Naive thymus-derived CD4-positive, alpha-beta T cell (primary cell): ENCODE measurements at regions of chr15 and their contacts with region 1.

Region 1: GRCh38 chr15:76190834-76191538 is 120.3 kb downstream of the ETFA start:
- DNase-seq: peak; percentile 13 to 75 (median 43)
- ATAC-seq: peak; percentile 88
- H3K4me3 ChIP-seq: no peak overlapping the region
- H3K4me3 Mint-ChIP-seq: peak overlapping the region; percentile 37 to 71 (median 66)
- H3K27ac ChIP-seq: no peak overlapping the region
- H3K27ac Mint-ChIP-seq: no peak overlapping the region
- H3K4me1 ChIP-seq: no peaks in the 10 kb centered on the region
- H3K4me1 Mint-ChIP-seq: peaks cover 8 to 13% (median 13%) of the 10 kb centered on the region in 7 donors
- H3K27me3 ChIP-seq: peaks cover 0 to 3% of the 10 kb centered on the region in 2 donors
- H3K27me3 Mint-ChIP-seq: peaks cover 31 to 51% (median 37%) of the 10 kb centered on the region in 5 donors

Region 2: DNA sequence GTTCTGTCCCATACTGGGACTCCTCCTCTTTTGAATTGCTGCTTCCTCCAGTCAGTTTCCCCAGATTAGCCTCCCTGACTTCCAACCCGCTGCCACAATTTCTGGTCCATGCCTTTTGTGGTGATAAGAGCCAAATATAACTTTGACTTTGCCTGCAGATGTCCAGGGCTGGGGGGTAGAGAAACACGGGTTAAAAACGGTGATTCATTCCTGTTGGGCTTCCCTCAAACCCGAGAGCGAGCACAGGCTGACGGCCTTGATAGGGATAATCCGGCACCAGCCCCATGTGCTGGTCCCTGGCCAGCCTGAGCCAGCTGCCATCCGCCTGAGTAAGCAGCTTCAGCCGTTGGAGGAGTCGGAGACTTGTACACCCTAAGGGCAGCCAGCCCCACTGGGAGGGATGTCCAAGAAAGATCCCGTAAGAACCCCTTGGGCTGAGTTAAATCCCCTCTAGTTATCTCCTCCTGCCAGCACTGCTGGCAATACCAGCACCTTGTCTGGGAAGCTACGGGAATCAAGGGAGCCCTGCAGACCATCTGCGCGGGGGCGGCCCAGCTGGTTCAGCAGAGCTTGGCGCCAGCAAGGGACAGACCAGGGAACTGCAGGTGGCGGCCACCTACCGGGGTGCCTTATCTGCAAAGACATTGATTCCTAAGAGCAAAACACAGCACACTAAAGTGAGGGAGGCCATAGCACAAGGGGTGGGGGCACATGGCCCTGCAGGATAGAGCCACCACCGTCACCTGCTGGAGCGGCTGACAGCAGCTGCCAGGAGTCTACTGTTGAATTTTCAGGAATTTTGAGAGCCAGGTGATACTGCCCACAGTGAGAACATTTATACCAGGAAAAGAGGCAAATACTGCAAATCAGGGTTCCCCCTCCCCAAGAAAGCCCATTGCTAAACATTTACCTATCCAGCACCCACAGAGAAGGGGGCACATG is 496.5 kb before region 1 on chr15:
- CTCF ChIA-PET with region 1: no interaction called
- POLR2A ChIA-PET with region 1: no interaction called
- intact Hi-C with region 1: no loop called
- DNase-seq: peak in 1 of 9 donors; percentile 5
- ATAC-seq: peak; percentile 40
- H3K4me3 ChIP-seq: no peak overlapping the region
- H3K4me3 Mint-ChIP-seq: no peak overlapping the region
- H3K27ac ChIP-seq: no peak overlapping the region
- H3K27ac Mint-ChIP-seq: peak overlapping the region in 1 of 9 donors; percentile 25
- H3K4me1 ChIP-seq: no peaks in the 10 kb centered on the region
- H3K4me1 Mint-ChIP-seq: peaks cover 8 to 20% (median 15%) of the 10 kb centered on the region in 7 donors
- H3K27me3 ChIP-seq: no peaks in the 10 kb centered on the region
- H3K27me3 Mint-ChIP-seq: peaks cover 6 to 16% (median 8%) of the 10 kb centered on the region in 5 donors

Region 3: GRCh38 chr15:76336254-76337058 is 145.5 kb after region 1 on chr15 and contains the start of gene ISL2:
- CTCF ChIA-PET with region 1: no interaction called
- POLR2A ChIA-PET with region 1: no interaction called
- intact Hi-C with region 1: loop called in 1 of 2 experiments (anchors 5 kb)
- DNase-seq: peak in 2 of 9 donors; percentile 21 to 83
- ATAC-seq: peak; percentile 52
- H3K4me3 ChIP-seq: peak within 1 kb of the TSS; percentile 28
- H3K4me3 Mint-ChIP-seq: peak within 1 kb of the TSS; percentile 61 to 84 (median 76)
- H3K27ac ChIP-seq: no peak within 1 kb of the TSS
- H3K27ac Mint-ChIP-seq: peak within 1 kb of the TSS in 5 of 9 donors; percentile 5 to 77 (median 39)
- H3K4me1 ChIP-seq: peaks cover 32 to 59% of the 10 kb centered on the region in 2 donors
- H3K4me1 Mint-ChIP-seq: peaks cover 37 to 60% (median 48%) of the 10 kb centered on the region in 7 donors
- H3K27me3 ChIP-seq: peaks cover 11 to 47% of the 10 kb centered on the region in 2 donors
- H3K27me3 Mint-ChIP-seq: peaks cover 73 to 84% (median 75%) of the 10 kb centered on the region in 5 donors
- total RNA-seq, gene ISL2: 0.21 to 0.51 (median 0.27) TPM in 3 of 5 experiments, not detected in the others

Region 4: GRCh38 chr15:76418369-76419140 is 227.6 kb after region 1 on chr15:
- CTCF ChIA-PET with region 1: no interaction called
- POLR2A ChIA-PET with region 1: no interaction called
- intact Hi-C with region 1: no loop called
- DNase-seq: no peak
- ATAC-seq: no peak
- H3K4me3 ChIP-seq: no peak overlapping the region
- H3K4me3 Mint-ChIP-seq: no peak overlapping the region
- H3K27ac ChIP-seq: no peak overlapping the region
- H3K27ac Mint-ChIP-seq: no peak overlapping the region
- H3K4me1 ChIP-seq: no peaks in the 10 kb centered on the region
- H3K4me1 Mint-ChIP-seq: no peaks in the 10 kb centered on the region
- H3K27me3 ChIP-seq: no peaks in the 10 kb centered on the region
- H3K27me3 Mint-ChIP-seq: no peaks in the 10 kb centered on the region

Region 5: DNA sequence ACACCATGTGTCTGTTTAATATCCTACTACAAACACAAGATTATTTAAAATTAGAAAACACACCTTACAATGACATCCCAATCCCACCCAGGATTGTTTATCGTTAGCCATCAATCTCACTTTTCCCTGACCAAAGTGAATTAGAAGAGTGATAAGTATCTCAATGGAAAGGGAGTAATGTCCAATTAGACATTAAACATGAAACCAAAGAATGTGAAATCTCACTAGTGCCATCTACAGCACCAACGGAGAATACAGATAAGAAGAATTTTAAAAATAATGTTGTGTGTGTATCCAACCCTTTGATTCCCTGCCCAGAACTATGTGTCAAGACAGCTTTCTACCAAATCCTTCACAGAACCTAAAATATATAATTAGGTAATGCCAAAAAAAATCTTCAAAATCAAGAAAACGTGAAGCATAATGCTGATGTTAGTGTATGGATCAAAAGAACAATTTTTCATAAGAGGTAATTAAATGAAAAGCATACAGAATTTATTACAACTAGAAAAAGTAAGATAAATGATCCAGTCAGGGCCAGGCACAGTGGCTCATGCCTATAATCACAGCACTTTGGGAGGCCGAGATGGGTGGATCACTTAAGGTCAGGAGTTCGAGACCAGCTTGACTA is 650.0 kb after region 1 on chr15:
- CTCF ChIA-PET with region 1: no interaction called
- POLR2A ChIA-PET with region 1: no interaction called
- intact Hi-C with region 1: loop called in 1 of 2 experiments (anchors 2 kb)
- DNase-seq: peak in 2 of 9 donors; percentile 1 to 11
- ATAC-seq: no peak
- H3K4me3 ChIP-seq: no peak overlapping the region
- H3K4me3 Mint-ChIP-seq: no peak overlapping the region
- H3K27ac ChIP-seq: no peak overlapping the region
- H3K27ac Mint-ChIP-seq: peak overlapping the region in 1 of 9 donors; percentile 17
- H3K4me1 ChIP-seq: no peaks in the 10 kb centered on the region
- H3K4me1 Mint-ChIP-seq: peaks cover 4 to 36% (median 28%) of the 10 kb centered on the region in 7 donors
- H3K27me3 ChIP-seq: no peaks in the 10 kb centered on the region
- H3K27me3 Mint-ChIP-seq: no peaks in the 10 kb centered on the region

Region 6: GRCh38 chr15:76866716-76867321 is 675.8 kb after region 1 on chr15:
- CTCF ChIA-PET with region 1: no interaction called
- POLR2A ChIA-PET with region 1: no interaction called
- intact Hi-C with region 1: loop called in 1 of 2 experiments (anchors 2 kb)
- DNase-seq: peak in 4 of 9 donors; percentile 6 to 22 (median 13)
- ATAC-seq: no peak
- H3K4me3 ChIP-seq: no peak overlapping the region
- H3K4me3 Mint-ChIP-seq: no peak overlapping the region
- H3K27ac ChIP-seq: no peak overlapping the region
- H3K27ac Mint-ChIP-seq: no peak overlapping the region
- H3K4me1 ChIP-seq: no peaks in the 10 kb centered on the region
- H3K4me1 Mint-ChIP-seq: peaks cover 18 to 73% (median 50%) of the 10 kb centered on the region in 7 donors
- H3K27me3 ChIP-seq: no peaks in the 10 kb centered on the region
- H3K27me3 Mint-ChIP-seq: no peaks in the 10 kb centered on the region